ENCODE measurements at regions of chr15 and their contacts with region 1.

Region 1: DNA sequence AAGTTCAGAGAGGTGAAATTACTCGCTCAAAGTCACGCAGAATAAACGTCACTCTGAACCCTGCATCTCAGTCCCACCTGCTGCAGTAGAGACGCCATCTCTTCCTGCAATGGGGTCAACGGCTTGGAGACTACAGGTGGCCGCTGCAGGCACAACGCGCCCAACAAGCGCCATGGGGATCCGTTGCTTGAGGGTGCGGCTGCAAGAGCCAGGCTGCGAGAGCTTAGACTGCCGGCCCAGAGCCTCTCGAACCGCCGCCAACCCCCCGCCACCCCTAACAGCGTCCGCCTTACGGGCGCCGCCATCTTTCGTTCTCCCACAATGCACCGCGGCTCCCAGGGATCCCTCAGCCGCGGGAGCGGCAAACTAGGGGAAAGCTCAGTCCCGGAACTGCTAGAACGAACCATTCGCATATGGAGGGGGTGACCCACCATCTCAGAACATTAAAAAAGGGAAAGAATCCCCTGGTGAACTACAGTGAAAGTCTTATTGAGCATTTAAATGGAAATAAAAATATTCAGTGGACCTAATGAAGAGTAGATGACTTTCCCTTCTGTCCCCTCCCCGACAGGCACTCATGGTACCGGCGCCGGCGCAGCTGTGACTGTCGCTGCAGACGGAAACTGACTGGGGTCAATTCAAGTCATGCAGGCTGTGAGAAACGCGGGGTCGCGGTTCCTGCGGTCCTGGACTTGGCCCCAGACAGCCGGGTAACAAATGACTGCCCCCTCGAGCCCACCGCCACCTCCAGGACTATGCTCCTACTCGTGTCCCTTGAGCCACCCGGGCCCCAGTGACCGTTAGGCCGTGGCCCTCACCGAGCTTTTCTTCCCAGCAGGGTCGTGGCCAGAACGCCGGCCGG is at the starts of genes MRPL46 and MRPS11:
- DNase-seq: peak; percentile 87 to 90
- H3K4me3 ChIP-seq: peak within 1 kb of the TSS; percentile 90
- H3K4me3 Mint-ChIP-seq: peak within 1 kb of the TSS; percentile 96
- H3K27ac Mint-ChIP-seq: peak within 1 kb of the TSS; percentile 98
- H3K4me1 ChIP-seq: peaks cover 6% of the 10 kb centered on the region
- H3K4me1 Mint-ChIP-seq: peaks cover 6% of the 10 kb centered on the region
- H3K27me3 ChIP-seq: no peaks in the 10 kb centered on the region
- H3K27me3 Mint-ChIP-seq: no peaks in the 10 kb centered on the region
- CTCF ChIP-seq: no peak
- total RNA-seq, gene MRPL46: 44.5 and 46.5 TPM in 2 replicates
- total RNA-seq, gene MRPS11: 48.4 and 50.2 TPM in 2 replicates

Region 2: GRCh38 chr15:88428805-88429605 is 38.3 kb before region 1 on chr15:
- CTCF ChIA-PET with region 1: no interaction called
- POLR2A ChIA-PET with region 1: no interaction called
- intact Hi-C with region 1: no loop called
- DNase-seq: no peak
- H3K4me3 ChIP-seq: no peak overlapping the region
- H3K4me3 Mint-ChIP-seq: no peak overlapping the region
- H3K27ac Mint-ChIP-seq: no peak overlapping the region
- H3K4me1 ChIP-seq: no peaks in the 10 kb centered on the region
- H3K4me1 Mint-ChIP-seq: no peaks in the 10 kb centered on the region
- H3K27me3 ChIP-seq: no peaks in the 10 kb centered on the region
- H3K27me3 Mint-ChIP-seq: peaks cover 29% of the 10 kb centered on the region
- CTCF ChIP-seq: no peak

Region 3: GRCh38 chr15:88456733-88457132 is 10.6 kb before region 1 on chr15:
- CTCF ChIA-PET with region 1: no interaction called
- POLR2A ChIA-PET with region 1: no interaction called
- intact Hi-C with region 1: no loop called
- DNase-seq: no peak
- H3K4me3 ChIP-seq: no peak overlapping the region
- H3K4me3 Mint-ChIP-seq: no peak overlapping the region
- H3K27ac Mint-ChIP-seq: no peak overlapping the region
- H3K4me1 ChIP-seq: no peaks in the 10 kb centered on the region
- H3K4me1 Mint-ChIP-seq: peaks cover 7% of the 10 kb centered on the region
- H3K27me3 ChIP-seq: no peaks in the 10 kb centered on the region
- H3K27me3 Mint-ChIP-seq: no peaks in the 10 kb centered on the region
- CTCF ChIP-seq: no peak

Region 4: DNA sequence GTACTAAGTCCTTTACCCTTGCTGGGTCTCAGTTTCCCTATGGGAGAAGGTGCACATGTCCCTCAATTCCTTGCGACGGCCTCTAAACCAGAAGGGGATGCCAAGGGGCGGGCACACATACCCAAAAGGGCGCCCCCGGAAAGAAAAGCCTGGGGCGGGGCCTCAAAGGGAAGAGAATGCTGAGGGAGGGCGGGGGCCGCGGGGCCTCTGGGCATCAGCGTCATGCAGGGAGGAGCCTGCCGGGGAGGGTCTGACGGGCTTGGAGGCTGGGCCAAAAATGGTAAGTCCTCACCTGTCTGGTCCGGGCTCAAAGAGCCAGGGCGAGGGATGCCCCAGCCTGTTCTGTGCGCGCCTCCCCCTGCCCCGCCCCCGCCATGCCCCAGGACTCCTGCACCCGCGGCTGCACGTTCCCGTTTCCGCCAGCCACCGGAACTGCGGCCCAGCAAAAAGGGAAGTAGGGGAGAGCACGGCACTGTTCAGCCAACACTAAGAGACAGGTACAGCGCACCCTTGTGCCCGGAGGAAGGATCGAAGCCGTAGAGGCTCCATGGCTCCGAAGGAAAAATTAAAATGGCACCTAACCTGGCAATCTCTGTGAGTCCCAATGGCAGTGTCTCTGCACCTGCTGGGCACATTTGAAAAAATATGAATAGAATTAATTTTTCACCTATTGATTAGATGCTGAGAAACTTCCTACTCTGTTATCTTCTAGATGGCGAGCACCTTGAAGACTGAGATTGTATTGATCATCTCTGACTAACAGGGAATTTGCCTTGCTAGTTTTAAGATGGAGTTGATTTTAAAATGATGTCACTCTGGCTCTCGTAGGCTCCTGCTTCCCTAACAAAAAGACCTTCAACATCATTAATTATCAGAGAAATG is 79.2 kb after region 1 on chr15 and contains the start of gene DET1:
- CTCF ChIA-PET with region 1: no interaction called
- POLR2A ChIA-PET with region 1: no interaction called
- intact Hi-C with region 1: loop called (anchors 5 kb)
- DNase-seq: peak; percentile 95 to 97
- H3K4me3 ChIP-seq: peak within 1 kb of the TSS; percentile 57
- H3K4me3 Mint-ChIP-seq: peak within 1 kb of the TSS; percentile 73
- H3K27ac Mint-ChIP-seq: peak within 1 kb of the TSS; percentile 77
- H3K4me1 ChIP-seq: peaks cover 41% of the 10 kb centered on the region
- H3K4me1 Mint-ChIP-seq: peaks cover 13% of the 10 kb centered on the region
- H3K27me3 ChIP-seq: no peaks in the 10 kb centered on the region
- H3K27me3 Mint-ChIP-seq: no peaks in the 10 kb centered on the region
- CTCF ChIP-seq: peak; percentile 48 to 78
- total RNA-seq, gene DET1: 2.0 and 3.7 TPM in 2 replicates

Region 5: DNA sequence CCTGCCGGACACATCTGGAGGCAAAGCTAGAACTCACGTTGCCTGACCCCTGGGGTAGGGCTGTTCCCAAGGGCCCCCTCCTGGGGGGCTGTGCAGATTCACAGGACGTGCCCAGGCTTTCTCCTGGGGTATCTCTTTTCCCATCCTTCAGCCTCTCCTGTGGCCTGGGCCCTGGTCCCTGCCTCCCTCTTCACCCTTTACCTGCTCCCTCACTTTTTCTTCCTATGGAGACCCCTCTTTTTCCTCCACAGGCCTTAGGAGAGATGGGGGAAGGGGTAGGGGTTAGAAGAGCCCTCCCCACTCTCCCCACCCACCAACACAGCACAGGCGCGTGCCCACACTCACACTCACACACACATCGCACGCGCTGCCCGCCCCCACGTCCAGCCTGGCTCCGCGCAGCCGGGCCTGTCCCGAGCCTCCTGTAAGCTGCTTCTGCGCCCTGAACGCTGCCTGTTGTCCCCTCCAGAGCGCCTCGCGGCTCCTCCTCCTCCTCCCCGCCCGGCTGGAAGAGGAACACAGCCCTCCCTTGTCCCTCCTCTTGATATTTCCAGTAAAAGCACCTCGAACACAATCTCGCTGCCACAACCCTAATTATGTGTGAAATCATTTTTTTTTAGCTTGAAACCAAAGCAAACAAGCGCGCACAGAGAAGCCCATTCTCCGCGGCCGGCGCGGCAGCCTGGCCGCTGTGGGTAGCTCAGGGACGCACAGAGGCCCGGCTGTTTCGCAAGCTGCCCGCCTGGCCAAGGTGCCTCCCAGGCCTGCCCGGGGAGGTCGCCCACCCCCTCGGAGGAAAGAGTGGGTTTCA is 302.1 kb after region 1 on chr15:
- CTCF ChIA-PET with region 1: no interaction called
- POLR2A ChIA-PET with region 1: no interaction called
- intact Hi-C with region 1: no loop called
- DNase-seq: no peak
- H3K4me3 ChIP-seq: no peak overlapping the region
- H3K4me3 Mint-ChIP-seq: no peak overlapping the region
- H3K27ac Mint-ChIP-seq: no peak overlapping the region
- H3K4me1 ChIP-seq: no peaks in the 10 kb centered on the region
- H3K4me1 Mint-ChIP-seq: no peaks in the 10 kb centered on the region
- H3K27me3 ChIP-seq: no peaks in the 10 kb centered on the region
- H3K27me3 Mint-ChIP-seq: peaks cover 14% of the 10 kb centered on the region
- CTCF ChIP-seq: no peak